A549 (cell line): ENCODE measurements at regions of chr3 and their contacts with region 1.

Region 1: DNA sequence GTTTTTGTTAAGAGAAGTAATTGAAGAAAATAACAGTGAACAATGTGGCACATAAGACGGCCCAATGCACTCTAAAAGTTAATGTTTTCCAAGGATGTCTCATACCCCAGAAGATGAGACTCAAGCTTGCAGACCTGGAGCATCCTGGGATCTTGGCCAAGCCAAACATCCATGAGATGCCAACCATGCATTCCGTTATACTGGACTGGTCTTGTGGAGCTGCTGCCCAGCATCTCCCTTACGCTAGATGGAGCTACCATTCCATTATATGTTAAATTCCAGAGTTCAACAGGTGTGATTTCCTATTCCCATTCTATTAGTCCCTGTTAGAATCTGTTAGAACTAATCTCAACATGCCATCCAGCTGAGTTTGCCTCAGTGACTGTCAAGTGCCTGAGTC is 181.8 kb downstream of the PDCD6IP start:
- DNase-seq: peak; percentile 89 to 94
- ATAC-seq: peak; percentile 99 to 100
- H3K4me3 ChIP-seq: no peak overlapping the region
- H3K27ac ChIP-seq: peak overlapping the region; percentile 48 to 59; a peak in 5 of 6 replicates
- H3K4me1 ChIP-seq: peaks cover 13% of the 10 kb centered on the region
- CTCF ChIP-seq: peak; percentile 93
- EP300 ChIP-seq: peak in 1 of 2 experiments; percentile 27; a peak in 1 of 5 replicates
- POLR2A ChIP-seq: no peak
- RAD21 ChIP-seq: peak; percentile 98

Region 2: GRCh38 chr3:33868309-33868708 is 111.9 kb before region 1 on chr3:
- CTCF ChIA-PET with region 1: no interaction called
- POLR2A ChIA-PET with region 1: no interaction called
- DNase-seq: no peak
- ATAC-seq: no peak
- H3K4me3 ChIP-seq: no peak overlapping the region
- H3K27ac ChIP-seq: no peak overlapping the region
- H3K4me1 ChIP-seq: no peaks in the 10 kb centered on the region
- CTCF ChIP-seq: no peak
- EP300 ChIP-seq: no peak
- POLR2A ChIP-seq: no peak
- RAD21 ChIP-seq: no peak

Region 3: DNA sequence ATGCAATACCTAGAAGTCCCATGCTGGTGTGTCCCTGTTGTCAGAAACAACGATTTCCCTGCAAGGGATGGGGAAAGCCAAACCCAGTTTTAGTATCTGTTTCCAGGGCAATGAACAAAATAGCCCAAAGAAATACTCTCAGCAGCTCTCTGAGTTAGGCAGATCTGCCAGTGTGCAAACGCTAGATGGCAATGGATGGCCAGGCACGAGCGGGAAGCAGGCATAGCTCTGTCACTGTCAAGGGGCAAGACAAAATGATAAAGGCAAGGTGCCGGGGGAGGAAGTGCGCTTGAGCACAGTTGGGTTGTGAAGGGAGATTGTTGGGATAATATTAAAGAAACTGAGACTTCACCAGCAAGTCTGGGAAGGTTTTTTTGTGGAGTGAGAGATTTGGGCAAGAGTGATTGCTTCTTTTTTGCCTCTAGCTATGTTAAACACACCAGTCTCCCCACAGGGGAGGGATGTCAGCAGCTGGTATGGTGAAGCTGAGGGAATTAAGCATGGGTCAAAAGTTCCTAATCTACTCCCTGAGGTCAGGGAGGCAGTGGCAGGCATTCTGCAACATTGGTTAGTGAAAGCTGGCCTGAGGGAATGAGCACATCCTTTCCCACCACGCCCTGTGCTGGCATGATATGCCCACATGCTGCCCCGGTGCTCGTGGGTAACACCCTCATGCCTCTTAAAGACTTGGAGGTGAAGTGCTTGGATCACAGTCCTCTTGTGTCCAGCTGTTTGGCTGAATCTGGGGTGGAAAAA is 64.3 kb before region 1 on chr3:
- CTCF ChIA-PET with region 1: interaction called, 11 read pairs
- POLR2A ChIA-PET with region 1: no interaction called
- DNase-seq: peak; percentile 46 to 69
- ATAC-seq: peak; percentile 86 to 94
- H3K4me3 ChIP-seq: no peak overlapping the region
- H3K27ac ChIP-seq: no peak overlapping the region
- H3K4me1 ChIP-seq: peaks cover 17% of the 10 kb centered on the region
- CTCF ChIP-seq: peak; percentile 57
- EP300 ChIP-seq: no peak
- POLR2A ChIP-seq: no peak
- RAD21 ChIP-seq: peak; percentile 81 to 92

Region 4: GRCh38 chr3:34001022-34001421 is 20.8 kb after region 1 on chr3:
- CTCF ChIA-PET with region 1: interaction called, 12 read pairs
- POLR2A ChIA-PET with region 1: no interaction called
- DNase-seq: no peak
- ATAC-seq: no peak; a peak in 1 of 6 replicates
- H3K4me3 ChIP-seq: no peak overlapping the region
- H3K27ac ChIP-seq: peak overlapping the region; percentile 12 to 14; a peak in 1 of 6 replicates
- H3K4me1 ChIP-seq: peaks cover 42% of the 10 kb centered on the region
- CTCF ChIP-seq: no peak
- EP300 ChIP-seq: no peak
- POLR2A ChIP-seq: no peak
- RAD21 ChIP-seq: no peak

Region 5: GRCh38 chr3:34260271-34261006 is 280.2 kb after region 1 on chr3:
- CTCF ChIA-PET with region 1: interaction called, 12 read pairs
- POLR2A ChIA-PET with region 1: no interaction called
- DNase-seq: peak; percentile 44 to 54
- ATAC-seq: peak; percentile 81 to 90
- H3K4me3 ChIP-seq: no peak overlapping the region
- H3K27ac ChIP-seq: no peak overlapping the region
- H3K4me1 ChIP-seq: peaks cover 3% of the 10 kb centered on the region; the same call in 1 of the 3 replicates
- CTCF ChIP-seq: peak; percentile 62
- EP300 ChIP-seq: no peak
- POLR2A ChIP-seq: no peak
- RAD21 ChIP-seq: peak; percentile 51 to 61; a peak in 4 of 5 replicates

Region 6: DNA sequence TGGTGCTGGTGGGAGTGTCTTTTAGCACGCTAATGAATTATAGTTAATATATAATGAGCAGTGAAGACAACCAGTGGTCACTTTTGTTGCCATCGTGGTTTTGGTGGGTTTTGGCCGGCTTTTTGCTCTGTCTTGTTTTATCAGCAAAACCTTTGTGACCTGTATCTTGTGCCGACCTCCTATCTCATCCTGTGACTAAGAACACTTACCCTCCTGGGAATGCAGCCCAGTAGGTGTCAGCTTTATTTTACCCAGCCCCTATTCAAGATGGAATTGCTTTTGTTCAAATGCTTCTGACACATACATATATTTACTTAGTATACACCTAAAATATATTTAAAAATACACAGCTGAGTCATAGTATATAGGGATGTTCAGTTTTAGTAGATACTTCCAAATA is 588.5 kb after region 1 on chr3:
- CTCF ChIA-PET with region 1: no interaction called
- POLR2A ChIA-PET with region 1: no interaction called
- DNase-seq: no peak
- ATAC-seq: no peak
- H3K4me3 ChIP-seq: no peak overlapping the region
- H3K27ac ChIP-seq: no peak overlapping the region
- H3K4me1 ChIP-seq: no peaks in the 10 kb centered on the region
- CTCF ChIP-seq: no peak
- EP300 ChIP-seq: no peak
- POLR2A ChIP-seq: no peak
- RAD21 ChIP-seq: no peak